ENCODE measurements at regions of chr19 and their contacts with region 1.

Region 1: GRCh38 chr19:5031231-5032100 is 62.6 kb downstream of the KDM4B start:
- DNase-seq: peak; percentile 82
- ATAC-seq: peak; percentile 84 to 86

Region 2: GRCh38 chr19:4815426-4816201 is 215.9 kb before region 1 on chr19:
- intact Hi-C with region 1: loop called in 1 of 2 experiments (anchors 5 kb)
- DNase-seq: peak; percentile 93
- ATAC-seq: peak; percentile 90 to 95

Region 3: GRCh38 chr19:4870025-4870700 is 161.3 kb before region 1 on chr19:
- intact Hi-C with region 1: loop called (anchors 2 to 5 kb)
- DNase-seq: peak; percentile 68
- ATAC-seq: peak in 1 of 2 donors; percentile 63

Region 4: DNA sequence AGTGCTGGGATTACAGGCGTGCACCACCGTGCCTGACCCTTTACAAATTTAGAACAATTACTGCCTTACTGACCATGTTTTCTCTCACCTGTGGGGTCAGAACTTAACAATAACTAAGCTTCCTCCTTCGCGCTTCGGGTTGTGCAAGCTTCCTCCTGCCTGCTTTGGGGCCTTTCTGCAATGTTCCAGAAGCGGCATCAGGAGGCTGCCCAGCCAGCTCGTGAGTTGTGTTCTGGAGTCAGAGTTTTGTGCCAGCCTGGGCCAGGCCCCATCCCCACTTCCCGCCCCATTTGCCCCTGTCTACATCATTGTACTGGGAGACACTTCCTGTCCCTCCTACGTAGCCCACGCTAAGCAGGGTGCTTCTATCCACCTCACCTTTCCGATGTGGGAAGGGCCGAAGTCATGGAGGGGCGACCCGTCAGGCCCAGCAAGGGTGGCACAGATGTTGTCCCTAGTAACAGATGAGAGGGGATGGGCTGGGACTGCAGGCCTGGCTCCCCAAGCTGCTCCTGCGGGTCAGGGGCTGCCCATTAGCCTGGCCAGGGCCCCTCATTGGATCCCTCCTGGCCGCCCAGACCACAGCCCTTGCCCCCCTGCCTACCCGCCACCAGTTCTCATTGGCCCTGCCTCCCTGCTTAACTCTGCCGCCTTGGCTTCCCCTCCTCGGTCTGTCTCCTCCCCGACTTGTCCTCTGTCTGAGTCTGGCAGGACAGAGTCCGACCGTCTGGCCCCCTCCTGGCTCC is 108.8 kb before region 1 on chr19:
- intact Hi-C with region 1: no loop called
- DNase-seq: no peak
- ATAC-seq: no peak

Region 5: DNA sequence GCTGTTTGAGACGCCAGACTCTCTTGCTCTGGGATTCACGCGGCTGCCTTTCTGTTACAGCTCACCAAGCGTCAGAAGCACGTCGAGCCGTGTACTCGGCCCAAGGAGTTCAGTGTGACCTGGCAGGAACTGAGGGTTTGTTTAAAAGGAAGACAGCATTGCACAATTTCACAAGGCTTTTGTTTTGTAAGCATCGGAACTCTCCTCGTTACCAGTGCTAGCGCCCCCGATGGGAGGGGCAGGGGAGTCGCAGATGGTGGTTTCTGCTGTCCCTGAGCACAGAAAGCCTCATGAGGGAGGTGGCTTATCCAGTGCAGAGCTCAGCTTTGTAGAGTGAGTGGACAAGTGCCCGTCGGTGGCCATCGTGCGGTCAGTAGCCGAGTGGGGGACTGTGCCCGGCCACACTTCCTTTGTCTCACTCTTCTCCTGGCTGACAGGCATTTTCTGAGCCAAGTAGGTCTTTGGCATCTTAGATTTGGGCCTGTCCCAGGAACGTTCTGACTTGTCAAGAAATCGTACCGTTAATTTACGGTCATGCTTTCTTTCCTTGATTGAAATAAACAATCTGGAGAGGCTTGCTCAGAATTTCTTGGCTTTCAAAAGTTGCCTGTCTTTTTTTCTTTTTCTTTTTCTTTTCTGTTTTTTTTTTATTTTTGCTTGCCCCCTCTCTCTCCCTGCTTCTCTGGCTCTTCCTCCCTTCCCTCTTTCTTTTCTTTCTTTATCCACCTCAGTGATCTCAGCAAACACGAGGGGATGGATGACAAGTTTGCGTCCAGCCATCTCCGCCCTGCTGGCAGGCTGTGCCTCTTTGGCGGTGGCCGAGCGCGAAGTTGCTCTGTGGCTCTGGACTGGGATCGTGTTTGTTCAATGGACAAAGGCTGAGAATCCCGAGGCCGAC is 54.8 kb before region 1 on chr19:
- intact Hi-C with region 1: loop called in 1 of 2 experiments (anchors 10 kb)
- DNase-seq: peak; percentile 82
- ATAC-seq: peak; percentile 62 to 72

Region 6: DNA sequence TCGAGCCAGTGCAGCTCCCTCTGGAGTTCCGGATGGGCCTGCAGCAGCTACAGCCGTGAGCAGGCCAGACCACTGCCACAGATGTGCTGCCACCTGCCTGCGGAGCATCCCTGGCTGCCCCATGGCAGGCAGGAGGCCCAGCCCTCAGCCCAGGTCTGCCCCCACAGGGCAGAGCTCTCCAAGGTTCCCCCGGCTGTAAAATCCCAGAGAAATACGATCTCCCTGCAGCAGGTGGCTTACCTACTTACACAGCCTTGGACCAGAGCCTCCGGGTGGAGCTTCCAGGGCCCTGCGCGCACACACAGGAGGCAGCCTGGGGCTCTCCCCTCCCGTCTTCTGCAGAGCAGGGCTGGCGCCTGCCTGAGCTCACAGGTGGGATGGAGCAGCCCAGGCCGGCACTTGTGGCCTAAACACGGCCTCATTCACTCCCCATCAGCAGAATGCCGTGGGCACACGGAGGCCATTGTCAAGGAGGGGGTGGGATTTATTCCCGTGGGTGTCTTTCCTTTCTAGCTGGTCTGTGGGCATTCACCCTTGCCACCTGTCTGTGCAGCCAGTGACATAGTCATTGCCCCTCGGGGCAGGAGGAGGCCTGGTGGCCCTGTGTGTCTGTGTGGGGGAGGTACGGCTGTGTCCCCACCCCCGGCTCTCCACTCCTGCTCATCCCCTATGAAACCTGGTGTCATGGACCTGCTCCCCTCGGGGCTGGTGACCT is 55.4 kb after region 1 on chr19:
- intact Hi-C with region 1: no loop called
- DNase-seq: no peak
- ATAC-seq: no peak

Measured in left cardiac atrium (tissue), 4 donors.